ENCODE measurements at regions of chr7 and their contacts with region 1.

Region 1: DNA sequence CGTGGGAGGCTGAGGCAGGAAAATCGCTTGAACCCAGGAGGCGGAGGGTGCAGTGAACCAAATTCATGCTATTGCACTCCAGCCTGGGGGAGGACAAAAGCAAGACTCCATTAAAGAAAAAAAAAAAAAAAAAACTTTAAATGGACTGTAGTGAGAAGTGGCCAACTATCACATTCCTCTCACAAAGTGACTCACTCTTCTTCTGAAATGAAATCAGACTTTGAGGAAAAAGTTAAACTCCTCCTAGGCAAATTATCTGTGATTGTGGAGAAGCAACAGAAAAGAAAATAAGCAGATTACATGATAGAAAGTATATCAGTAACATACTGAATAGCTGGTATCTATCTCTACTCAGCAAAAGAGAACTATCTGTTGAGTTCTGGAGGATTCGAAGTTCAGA is 234.3 kb upstream of the PHF14 start:
- DNase-seq: no peak
- ATAC-seq: no peak
- H3K4me3 ChIP-seq: no peak overlapping the region
- H3K4me3 Mint-ChIP-seq: no peak overlapping the region
- H3K27ac ChIP-seq: no peak overlapping the region
- H3K27ac Mint-ChIP-seq: no peak overlapping the region
- H3K4me1 ChIP-seq: no peaks in the 10 kb centered on the region
- H3K4me1 Mint-ChIP-seq: no peaks in the 10 kb centered on the region
- H3K27me3 ChIP-seq: peaks cover 0 to 5% of the 10 kb centered on the region in 2 experiments
- H3K27me3 Mint-ChIP-seq: peaks cover 0 to 2% of the 10 kb centered on the region in 2 donors

Region 2: DNA sequence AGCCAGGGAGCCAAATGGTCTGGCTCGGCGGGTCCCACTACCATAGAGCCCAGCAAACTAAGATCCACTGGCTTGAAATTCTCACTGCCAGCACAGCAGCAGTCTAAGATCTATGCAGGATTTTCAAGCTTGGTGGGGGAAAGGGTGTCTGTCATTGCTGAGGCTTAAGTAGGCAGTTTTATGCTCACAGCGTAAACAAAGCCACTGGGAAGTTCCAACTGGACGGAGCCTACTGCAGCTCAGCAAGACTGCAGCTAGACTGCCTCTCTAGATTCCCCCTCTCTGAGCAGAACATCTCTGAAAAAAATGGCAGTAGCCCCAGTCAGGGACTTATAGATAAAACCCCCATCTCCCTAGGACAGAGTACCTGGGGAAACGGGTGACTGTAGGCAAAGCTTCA is 43.3 kb before region 1 on chr7:
- CTCF ChIA-PET with region 1: no interaction called
- POLR2A ChIA-PET with region 1: no interaction called
- DNase-seq: no peak
- ATAC-seq: no peak
- H3K4me3 ChIP-seq: no peak overlapping the region
- H3K4me3 Mint-ChIP-seq: no peak overlapping the region
- H3K27ac ChIP-seq: no peak overlapping the region
- H3K27ac Mint-ChIP-seq: no peak overlapping the region
- H3K4me1 ChIP-seq: no peaks in the 10 kb centered on the region
- H3K4me1 Mint-ChIP-seq: no peaks in the 10 kb centered on the region
- H3K27me3 ChIP-seq: peaks cover 0 to 3% of the 10 kb centered on the region in 2 experiments
- H3K27me3 Mint-ChIP-seq: no peaks in the 10 kb centered on the region

Region 3: DNA sequence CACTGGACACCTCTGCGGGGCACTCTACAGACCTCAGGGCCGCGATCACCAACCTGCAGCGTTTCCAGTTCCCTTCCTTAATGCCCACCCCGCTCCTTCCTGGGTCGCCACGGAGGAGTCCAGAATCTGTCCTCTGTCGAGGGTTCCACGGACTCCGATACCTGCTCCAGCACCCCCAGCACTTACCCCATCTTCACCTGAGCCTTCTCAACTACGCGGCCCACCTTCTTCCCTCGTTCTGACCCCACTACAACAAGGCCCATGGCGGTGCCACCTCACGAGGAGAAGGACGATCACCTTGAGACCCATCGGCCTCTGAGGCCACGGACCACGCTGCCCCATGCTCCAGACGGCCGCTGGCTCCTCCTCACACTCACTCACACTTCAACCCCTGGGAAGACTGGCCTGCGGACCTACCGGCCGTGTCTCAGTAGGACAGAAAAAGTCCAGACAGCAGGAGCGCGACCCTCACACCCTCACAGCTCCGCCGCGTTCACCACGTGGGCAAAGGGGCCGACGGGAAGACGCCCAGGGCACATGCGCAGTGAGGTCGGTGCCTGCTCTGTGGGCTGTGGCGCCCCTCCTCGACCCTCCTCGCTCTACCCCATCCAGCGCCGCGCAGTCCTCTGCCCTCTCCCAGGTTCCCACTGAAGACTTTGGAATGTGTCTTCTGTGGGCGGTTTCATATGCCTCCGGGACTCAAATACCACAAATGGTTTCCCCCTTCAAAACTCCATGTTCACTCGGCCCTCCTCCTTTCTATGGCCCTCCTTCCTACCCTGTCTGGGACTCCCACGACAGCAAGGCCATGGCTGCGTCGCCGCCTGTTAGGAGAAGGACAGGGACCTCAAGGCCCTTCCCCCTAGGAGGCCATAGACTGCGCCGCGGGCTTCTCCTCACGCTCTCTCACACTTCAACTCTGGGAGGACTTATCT is 40.3 kb after region 1 on chr7:
- CTCF ChIA-PET with region 1: no interaction called
- POLR2A ChIA-PET with region 1: no interaction called
- DNase-seq: no peak
- ATAC-seq: no peak
- H3K4me3 ChIP-seq: no peak overlapping the region
- H3K4me3 Mint-ChIP-seq: no peak overlapping the region
- H3K27ac ChIP-seq: no peak overlapping the region
- H3K27ac Mint-ChIP-seq: no peak overlapping the region
- H3K4me1 ChIP-seq: no peaks in the 10 kb centered on the region
- H3K4me1 Mint-ChIP-seq: no peaks in the 10 kb centered on the region
- H3K27me3 ChIP-seq: no peaks in the 10 kb centered on the region
- H3K27me3 Mint-ChIP-seq: no peaks in the 10 kb centered on the region

Region 4: DNA sequence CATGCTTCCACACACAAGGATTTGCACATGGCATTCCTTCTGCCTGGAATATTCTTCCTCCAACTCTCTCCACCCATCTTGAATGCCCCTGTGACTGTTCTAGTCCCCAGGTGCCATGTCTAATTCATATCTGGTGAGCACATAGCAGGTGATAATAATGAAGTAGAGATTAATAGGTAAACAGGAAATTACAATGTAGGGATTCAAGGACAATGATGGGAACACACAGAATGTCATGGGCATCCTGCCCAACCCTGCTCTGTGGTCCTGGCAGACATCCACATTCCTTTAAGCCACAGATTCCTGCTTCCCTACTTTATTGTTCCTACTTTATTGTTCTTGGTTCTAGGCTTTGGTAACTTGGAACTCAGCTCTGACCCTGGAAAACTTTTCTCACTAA is 976.8 kb after region 1 on chr7:
- CTCF ChIA-PET with region 1: no interaction called
- POLR2A ChIA-PET with region 1: interaction called in 1 of 2 experiments, 11 read pairs
- DNase-seq: no peak
- ATAC-seq: no peak
- H3K4me3 ChIP-seq: no peak overlapping the region
- H3K4me3 Mint-ChIP-seq: no peak overlapping the region
- H3K27ac ChIP-seq: no peak overlapping the region
- H3K27ac Mint-ChIP-seq: no peak overlapping the region
- H3K4me1 ChIP-seq: no peaks in the 10 kb centered on the region
- H3K4me1 Mint-ChIP-seq: no peaks in the 10 kb centered on the region
- H3K27me3 ChIP-seq: no peaks in the 10 kb centered on the region
- H3K27me3 Mint-ChIP-seq: no peaks in the 10 kb centered on the region